Calu3 (cell line): ENCODE measurements at regions of chr4 and their contacts with region 1.

Region 1: DNA sequence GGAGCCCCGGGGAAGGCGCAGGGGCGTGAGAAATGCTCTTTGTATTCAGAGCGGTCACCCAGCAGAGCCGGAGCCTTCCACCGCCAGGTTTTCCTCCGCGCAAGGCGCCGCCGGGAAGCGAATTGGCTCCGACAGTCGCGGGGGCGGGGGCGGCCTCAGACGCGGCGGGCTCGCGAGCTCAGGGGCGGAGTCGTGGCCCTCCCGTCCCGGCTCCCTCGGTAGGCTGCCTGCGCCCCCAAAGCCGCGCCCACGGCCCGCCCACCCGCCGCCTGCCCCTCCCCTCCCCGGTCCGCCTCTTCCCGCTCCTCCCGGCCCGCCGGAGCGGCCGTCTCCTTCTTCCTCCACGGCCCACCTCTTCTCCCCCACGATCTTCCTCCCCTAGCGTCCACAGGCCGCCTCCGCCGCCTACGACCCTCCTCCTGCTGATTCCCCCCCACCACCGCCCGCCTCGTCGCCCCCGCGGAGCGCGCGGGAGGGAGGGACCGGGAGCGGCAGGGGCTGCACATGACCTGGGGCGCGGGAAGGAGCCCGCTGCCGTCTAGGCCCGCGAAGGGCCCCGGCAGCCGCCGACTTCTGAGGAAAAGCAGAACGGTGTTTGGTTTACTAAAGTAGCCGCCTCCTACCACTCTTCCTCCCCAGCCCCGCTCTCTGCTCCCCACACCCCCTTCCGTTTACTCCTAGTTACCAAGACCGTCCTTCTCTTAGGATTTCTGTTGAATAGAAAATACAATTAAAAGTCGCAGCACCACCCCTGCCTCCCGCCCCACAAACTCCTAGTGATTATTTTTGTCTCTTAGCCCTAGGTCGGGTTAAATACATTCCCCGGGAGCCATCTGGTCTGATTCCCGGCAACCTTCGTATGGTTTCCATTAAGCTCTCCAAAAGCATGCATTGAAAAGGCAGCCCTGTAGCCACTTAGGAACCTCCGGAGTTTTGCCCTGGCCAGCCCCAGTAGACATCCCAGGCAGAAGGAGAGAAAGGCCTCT is 53.2 kb downstream of the C4orf51 start:
- DNase-seq: peak; percentile 91
- H3K4me3 Mint-ChIP-seq: peak overlapping the region; percentile 59
- H3K27ac Mint-ChIP-seq: peak overlapping the region; percentile 94
- H3K4me1 Mint-ChIP-seq: peaks cover 29% of the 10 kb centered on the region
- H3K27me3 Mint-ChIP-seq: no peaks in the 10 kb centered on the region
- CTCF ChIP-seq: no peak

Region 2: GRCh38 chr4:145481164-145481941 is 251.8 kb before region 1 on chr4 and contains the start of gene SMAD1:
- CTCF ChIA-PET with region 1: no interaction called
- intact Hi-C with region 1: loop called (anchors 10 kb)
- DNase-seq: peak; percentile 72
- H3K4me3 Mint-ChIP-seq: no peak within 1 kb of the TSS
- H3K27ac Mint-ChIP-seq: no peak within 1 kb of the TSS
- H3K4me1 Mint-ChIP-seq: peaks cover 19% of the 10 kb centered on the region
- H3K27me3 Mint-ChIP-seq: no peaks in the 10 kb centered on the region
- CTCF ChIP-seq: no peak
- total RNA-seq, gene SMAD1: 15.3 and 19.3 TPM in 2 replicates

Region 3: DNA sequence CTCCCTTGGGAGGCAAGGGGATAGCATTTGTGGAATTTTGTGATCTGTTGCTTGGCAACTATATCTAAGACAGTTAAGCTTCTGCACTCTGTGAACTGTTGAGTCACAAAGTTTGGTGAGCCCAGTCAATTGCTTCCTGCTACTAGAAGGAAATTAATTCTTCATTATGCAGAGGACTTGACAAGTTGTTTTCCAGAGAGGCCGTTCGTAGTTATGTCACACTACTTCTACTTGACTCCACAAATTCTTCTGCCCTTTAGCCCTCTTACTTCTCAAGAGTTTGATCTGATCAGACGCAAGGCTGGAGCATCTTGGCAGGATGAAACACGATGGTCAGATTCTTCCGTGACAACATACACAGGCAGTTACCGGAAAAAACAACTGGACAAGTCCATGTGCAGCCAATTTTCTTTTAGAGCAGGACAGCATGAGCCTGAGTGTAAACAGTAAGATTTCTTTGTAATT is 53.2 kb before region 1 on chr4 and contains the start of gene C4orf51:
- CTCF ChIA-PET with region 1: no interaction called
- intact Hi-C with region 1: loop called (anchors 5 kb)
- DNase-seq: peak; percentile 31
- H3K4me3 Mint-ChIP-seq: peak within 1 kb of the TSS; percentile 50
- H3K27ac Mint-ChIP-seq: peak within 1 kb of the TSS; percentile 91
- H3K4me1 Mint-ChIP-seq: peaks cover 28% of the 10 kb centered on the region
- H3K27me3 Mint-ChIP-seq: no peaks in the 10 kb centered on the region
- CTCF ChIP-seq: no peak
- total RNA-seq, gene C4orf51: not detected in 2 replicates

Region 4: GRCh38 chr4:145808021-145808650 is 74.9 kb after region 1 on chr4:
- CTCF ChIA-PET with region 1: no interaction called
- intact Hi-C with region 1: loop called (anchors 5 kb)
- DNase-seq: peak; percentile 49
- H3K4me3 Mint-ChIP-seq: peak overlapping the region; percentile 46
- H3K27ac Mint-ChIP-seq: peak overlapping the region; percentile 94
- H3K4me1 Mint-ChIP-seq: peaks cover 34% of the 10 kb centered on the region
- H3K27me3 Mint-ChIP-seq: no peaks in the 10 kb centered on the region
- CTCF ChIP-seq: no peak

Region 5: GRCh38 chr4:145936142-145936996 is 203.2 kb after region 1 on chr4:
- CTCF ChIA-PET with region 1: no interaction called
- intact Hi-C with region 1: loop called (anchors 10 kb)
- DNase-seq: peak; percentile 74
- H3K4me3 Mint-ChIP-seq: peak overlapping the region; percentile 80
- H3K27ac Mint-ChIP-seq: peak overlapping the region; percentile 95
- H3K4me1 Mint-ChIP-seq: peaks cover 35% of the 10 kb centered on the region
- H3K27me3 Mint-ChIP-seq: no peaks in the 10 kb centered on the region
- CTCF ChIP-seq: no peak